CD14-positive monocyte (primary cell): ENCODE measurements at regions of chr6 and their contacts with region 1.

Region 1: DNA sequence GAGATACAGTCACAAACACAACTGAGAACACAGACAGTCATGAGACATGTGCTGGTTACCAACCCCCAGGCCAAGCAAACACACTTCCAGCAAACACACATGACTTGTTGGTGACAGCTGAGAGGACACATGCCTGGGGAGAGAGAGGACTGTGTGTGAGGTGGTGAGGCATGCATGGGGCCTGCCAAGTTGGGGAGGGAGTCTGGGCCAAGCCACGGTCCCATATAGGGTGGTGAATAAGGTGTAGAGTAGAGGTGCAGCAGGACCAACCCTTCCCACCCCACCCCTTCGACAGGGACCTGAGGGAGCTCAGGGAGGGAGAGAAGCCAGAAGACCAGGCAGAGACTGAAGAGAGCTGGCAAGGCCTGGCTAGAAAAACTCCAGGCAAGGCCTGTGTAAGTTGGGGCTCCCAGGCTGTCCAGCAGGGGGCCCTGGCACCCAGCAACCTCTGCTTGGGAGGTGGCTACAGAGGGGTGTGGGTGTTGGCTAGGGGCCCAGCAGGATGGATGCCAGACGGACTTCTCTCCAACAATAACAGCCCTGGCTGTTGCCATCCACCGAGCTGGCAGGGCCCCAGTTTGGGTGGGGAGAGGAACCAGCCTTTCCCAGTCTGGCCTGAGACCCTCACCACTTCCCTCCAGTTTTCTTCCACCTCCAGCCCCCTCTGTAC is 2.0 kb upstream of the SLC29A1 start:
- DNase-seq: peak; percentile 78 to 83 (median 82)
- H3K4me3 ChIP-seq: no peak overlapping the region
- H3K4me3 Mint-ChIP-seq: peak overlapping the region; percentile 55 to 57
- H3K27ac ChIP-seq: peak overlapping the region in 1 of 2 donors; percentile 37
- H3K27ac Mint-ChIP-seq: peak overlapping the region in 6 of 7 donors; percentile 5 to 94 (median 71)
- H3K4me1 ChIP-seq: peaks cover 80 to 86% of the 10 kb centered on the region in 2 donors
- H3K4me1 Mint-ChIP-seq: peaks cover 79% of the 10 kb centered on the region
- H3K27me3 ChIP-seq: peaks cover 0 to 7% of the 10 kb centered on the region in 2 donors
- H3K27me3 Mint-ChIP-seq: peaks cover 5 to 17% (median 8%) of the 10 kb centered on the region in 3 donors
- CTCF ChIP-seq: peak; percentile 91

Region 2: DNA sequence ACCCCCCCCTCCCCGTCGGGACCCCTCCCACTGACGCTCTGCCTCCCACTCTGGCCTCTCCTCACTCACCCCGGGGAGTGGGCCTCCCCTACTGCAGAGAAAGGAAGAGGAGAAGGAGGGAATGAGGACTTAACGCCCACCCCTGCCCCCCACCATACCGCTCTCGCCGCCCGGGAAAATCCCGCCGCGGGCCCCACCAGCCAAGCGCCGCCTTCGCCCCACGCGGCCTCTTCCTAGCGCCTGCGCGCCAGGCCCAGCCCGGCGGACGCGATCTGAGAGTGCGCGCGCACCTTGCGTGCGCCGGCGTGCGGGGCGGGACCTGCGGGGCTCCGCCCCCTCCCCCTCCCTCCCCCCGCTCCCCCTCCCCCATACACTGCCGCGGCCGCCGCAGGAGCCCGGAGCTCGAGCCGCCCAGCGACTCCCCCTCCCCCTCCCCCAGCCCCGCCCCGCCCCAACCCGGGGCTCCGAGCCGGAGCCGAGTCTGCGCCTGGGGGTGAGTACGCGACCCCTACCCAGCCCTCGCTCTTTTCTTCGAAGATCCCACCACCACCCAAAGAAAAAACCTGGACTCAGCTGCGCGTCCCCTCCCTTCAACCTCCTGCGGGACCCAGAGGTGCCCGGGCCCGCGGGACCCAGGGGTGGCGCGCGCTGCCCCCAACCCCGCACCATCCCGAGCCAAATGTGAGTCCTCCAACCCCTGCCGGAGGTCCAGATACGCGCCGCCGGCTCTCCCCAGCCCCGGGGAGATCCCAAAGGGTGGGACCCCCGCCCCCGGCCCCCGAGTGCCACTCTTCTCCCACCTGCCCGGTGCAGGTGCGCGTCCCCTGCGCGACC is 94.0 kb before region 1 on chr6 and contains the starts of genes MRPL14 and TMEM63B:
- intact Hi-C with region 1: loop called in 1 of 2 experiments (anchors 5 kb)
- DNase-seq: peak; percentile 83 to 88 (median 87)
- H3K4me3 ChIP-seq: peak within 1 kb of the TSS; percentile 87 to 92 (median 87)
- H3K4me3 Mint-ChIP-seq: peak within 1 kb of the TSS; percentile 92 to 98
- H3K27ac ChIP-seq: peak within 1 kb of the TSS; percentile 91 to 92
- H3K27ac Mint-ChIP-seq: peak within 1 kb of the TSS; percentile 90 to 96 (median 94)
- H3K4me1 ChIP-seq: peaks cover 27 to 43% of the 10 kb centered on the region in 2 donors
- H3K4me1 Mint-ChIP-seq: peaks cover 48% of the 10 kb centered on the region
- H3K27me3 ChIP-seq: peaks cover 0 to 4% of the 10 kb centered on the region in 2 donors
- H3K27me3 Mint-ChIP-seq: peaks cover under 1 to 8% (median 7%) of the 10 kb centered on the region in 3 donors
- CTCF ChIP-seq: no peak
- polyA plus RNA-seq, gene MRPL14: 18.5 to 91.5 (median 78.2) TPM
- polyA plus RNA-seq, gene TMEM63B: 1.3 to 25.7 (median 1.9) TPM

Region 3: GRCh38 chr6:44237813-44238433 is 16.5 kb after region 1 on chr6:
- intact Hi-C with region 1: loop called in 1 of 2 experiments (anchors 2 kb)
- DNase-seq: peak; percentile 84 to 90 (median 85)
- H3K4me3 ChIP-seq: peak overlapping the region; percentile 56 to 86 (median 76)
- H3K4me3 Mint-ChIP-seq: peak overlapping the region; percentile 83 to 90
- H3K27ac ChIP-seq: peak overlapping the region; percentile 65 to 96
- H3K27ac Mint-ChIP-seq: peak overlapping the region; percentile 90 to 99 (median 97)
- H3K4me1 ChIP-seq: peaks cover 29 to 32% of the 10 kb centered on the region in 2 donors
- H3K4me1 Mint-ChIP-seq: peaks cover 38% of the 10 kb centered on the region
- H3K27me3 ChIP-seq: no peaks in the 10 kb centered on the region
- H3K27me3 Mint-ChIP-seq: peaks cover 2 to 3% (median 3%) of the 10 kb centered on the region in 3 donors
- CTCF ChIP-seq: peak; percentile 99

Region 4: DNA sequence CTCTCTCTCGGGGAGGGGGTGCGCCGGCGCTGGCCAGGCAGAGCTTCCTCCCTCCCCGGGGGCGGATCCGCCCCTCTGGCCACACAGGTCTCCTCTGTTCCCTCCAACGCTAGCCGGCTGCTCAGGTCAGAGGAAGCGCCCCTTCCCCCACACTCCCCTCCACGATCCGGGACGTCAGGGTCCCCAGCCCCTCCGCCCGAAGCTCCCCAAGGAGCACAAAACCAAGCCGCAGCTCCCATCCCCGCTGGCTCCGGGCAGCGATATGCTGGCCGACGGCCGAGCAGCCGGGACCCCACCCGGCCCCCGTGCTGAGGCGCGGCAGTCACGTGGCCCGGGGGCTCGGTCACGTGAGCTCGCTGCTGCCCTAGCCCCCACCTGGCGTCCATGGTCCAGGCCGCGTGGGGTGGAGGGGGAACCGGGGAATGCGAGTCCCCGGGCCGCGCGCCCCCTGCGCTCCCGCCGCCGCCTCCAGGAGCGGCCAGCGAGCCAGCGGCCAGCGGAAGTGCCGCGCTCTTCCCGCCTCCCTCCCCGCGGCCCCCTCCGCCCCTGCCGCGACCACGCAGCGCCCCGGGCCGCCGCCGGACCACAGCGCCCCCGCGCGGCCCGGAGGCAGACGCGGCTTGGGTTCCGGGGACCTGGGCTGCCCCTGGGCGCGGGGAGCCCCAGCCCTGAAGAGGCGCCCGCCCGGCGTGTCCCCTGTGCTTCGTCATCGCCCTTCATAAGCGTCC is 35.8 kb after region 1 on chr6 and contains the start of gene SLC35B2:
- intact Hi-C with region 1: loop called (anchors 5 kb)
- DNase-seq: peak; percentile 76 to 90 (median 79)
- H3K4me3 ChIP-seq: peak within 1 kb of the TSS; percentile 49 to 85 (median 69)
- H3K4me3 Mint-ChIP-seq: peak within 1 kb of the TSS; percentile 79 to 87
- H3K27ac ChIP-seq: peak within 1 kb of the TSS; percentile 66 to 69
- H3K27ac Mint-ChIP-seq: peak within 1 kb of the TSS; percentile 83 to 97 (median 91)
- H3K4me1 ChIP-seq: peaks cover 29 to 52% of the 10 kb centered on the region in 2 donors
- H3K4me1 Mint-ChIP-seq: peaks cover 58% of the 10 kb centered on the region
- H3K27me3 ChIP-seq: no peaks in the 10 kb centered on the region
- H3K27me3 Mint-ChIP-seq: peaks cover 0 to 6% (median 2%) of the 10 kb centered on the region in 3 donors
- CTCF ChIP-seq: peak; percentile 87
- polyA plus RNA-seq, gene SLC35B2: 17.4 to 54.0 (median 30.6) TPM

Region 5: GRCh38 chr6:44285552-44286284 is 64.3 kb after region 1 on chr6:
- intact Hi-C with region 1: no loop called
- DNase-seq: no peak
- H3K4me3 ChIP-seq: no peak overlapping the region
- H3K4me3 Mint-ChIP-seq: peak overlapping the region in 1 of 2 donors; percentile 6
- H3K27ac ChIP-seq: no peak overlapping the region
- H3K27ac Mint-ChIP-seq: no peak overlapping the region
- H3K4me1 ChIP-seq: peaks cover 9% of the 10 kb centered on the region in 2 donors
- H3K4me1 Mint-ChIP-seq: peaks cover 13% of the 10 kb centered on the region
- H3K27me3 ChIP-seq: peaks cover 0 to 16% of the 10 kb centered on the region in 2 donors
- H3K27me3 Mint-ChIP-seq: peaks cover 16 to 43% (median 31%) of the 10 kb centered on the region in 3 donors
- CTCF ChIP-seq: no peak